OCI-LY7 (cell line): ENCODE measurements at regions of chr4 and their contacts with region 1.

Region 1: DNA sequence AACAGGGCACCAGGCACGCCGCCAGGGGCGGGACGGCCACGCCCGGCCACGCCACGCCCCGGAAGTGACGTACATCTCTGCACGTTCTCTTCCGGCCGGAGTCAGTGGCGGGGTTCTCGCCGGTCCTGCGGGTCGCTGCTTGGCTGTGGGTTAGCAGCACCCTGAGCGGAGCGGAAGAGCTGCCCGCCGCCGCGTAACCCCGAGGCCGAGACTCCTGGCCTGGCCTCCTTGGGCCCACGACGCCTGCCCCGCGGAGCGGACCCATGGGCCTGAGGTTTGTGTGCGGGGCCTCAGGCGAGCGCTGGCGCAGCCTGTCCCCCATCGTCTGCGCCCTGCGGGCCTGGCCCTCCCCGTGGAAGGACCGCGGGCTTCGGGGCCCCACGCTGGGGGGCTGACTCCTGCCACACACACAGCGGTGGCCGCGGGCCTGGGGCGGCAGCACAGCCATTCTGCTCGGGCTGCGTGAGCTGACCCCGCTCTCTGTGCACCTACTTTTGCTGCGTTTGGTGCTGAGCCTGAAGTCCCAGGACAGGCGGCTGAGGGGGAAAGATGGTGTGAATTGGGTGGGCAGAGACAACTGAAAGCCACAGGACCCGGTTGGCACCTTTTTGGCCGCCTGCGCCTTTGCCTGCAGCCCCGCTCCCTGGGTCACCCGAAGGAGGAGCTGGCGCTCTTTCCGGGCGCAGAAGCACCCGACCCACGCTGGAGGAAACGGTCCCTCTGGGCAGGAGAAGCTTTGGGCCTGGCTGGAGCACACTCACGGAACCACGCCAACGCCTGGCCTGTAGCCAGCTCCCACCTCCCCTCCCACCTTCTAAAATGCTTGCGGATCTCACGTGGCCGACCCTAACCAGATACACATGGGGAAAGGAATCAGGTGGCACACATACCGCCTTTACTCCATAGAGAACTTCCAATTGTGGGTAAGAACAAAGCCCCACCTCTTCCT is 28.1 kb downstream of the NOP14 start:
- DNase-seq: peak; percentile 96
- H3K4me3 ChIP-seq: peak overlapping the region; percentile 98
- H3K27ac ChIP-seq: peak overlapping the region; percentile 53
- H3K4me1 ChIP-seq: peaks cover 56% of the 10 kb centered on the region
- CTCF ChIP-seq: 0 out of 2 replicates have a peak, but pooled peaks have one; percentile 26

Region 2: DNA sequence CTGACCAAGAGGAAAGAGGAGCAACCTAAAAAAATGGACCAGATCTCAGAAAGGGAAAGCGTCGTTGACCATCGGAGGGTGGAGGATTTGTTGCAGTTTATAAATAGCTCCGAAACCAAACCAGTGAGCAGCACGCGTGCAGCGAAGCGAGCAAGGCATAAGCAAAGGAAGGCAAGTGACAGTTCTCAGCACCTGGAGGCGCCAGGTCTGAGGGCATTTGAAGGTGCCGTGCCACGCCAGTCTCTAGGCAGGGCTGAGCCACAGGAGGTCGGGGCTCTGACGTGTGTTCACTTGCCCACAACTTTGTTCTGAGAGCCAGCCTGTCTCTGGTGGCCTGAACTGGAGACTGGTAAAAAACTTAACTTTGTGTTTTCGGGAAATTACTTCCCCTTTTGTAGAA is 238.7 kb before region 1 on chr4:
- CTCF ChIA-PET with region 1: no interaction called
- POLR2A ChIA-PET with region 1: interaction called, 3 read pairs
- intact Hi-C with region 1: loop called (anchors 5 kb)
- DNase-seq: peak; percentile 98
- H3K4me3 ChIP-seq: peak overlapping the region; percentile 60
- H3K27ac ChIP-seq: peak overlapping the region; percentile 93
- H3K4me1 ChIP-seq: peaks cover 58% of the 10 kb centered on the region
- CTCF ChIP-seq: peak; percentile 60

Region 3: DNA sequence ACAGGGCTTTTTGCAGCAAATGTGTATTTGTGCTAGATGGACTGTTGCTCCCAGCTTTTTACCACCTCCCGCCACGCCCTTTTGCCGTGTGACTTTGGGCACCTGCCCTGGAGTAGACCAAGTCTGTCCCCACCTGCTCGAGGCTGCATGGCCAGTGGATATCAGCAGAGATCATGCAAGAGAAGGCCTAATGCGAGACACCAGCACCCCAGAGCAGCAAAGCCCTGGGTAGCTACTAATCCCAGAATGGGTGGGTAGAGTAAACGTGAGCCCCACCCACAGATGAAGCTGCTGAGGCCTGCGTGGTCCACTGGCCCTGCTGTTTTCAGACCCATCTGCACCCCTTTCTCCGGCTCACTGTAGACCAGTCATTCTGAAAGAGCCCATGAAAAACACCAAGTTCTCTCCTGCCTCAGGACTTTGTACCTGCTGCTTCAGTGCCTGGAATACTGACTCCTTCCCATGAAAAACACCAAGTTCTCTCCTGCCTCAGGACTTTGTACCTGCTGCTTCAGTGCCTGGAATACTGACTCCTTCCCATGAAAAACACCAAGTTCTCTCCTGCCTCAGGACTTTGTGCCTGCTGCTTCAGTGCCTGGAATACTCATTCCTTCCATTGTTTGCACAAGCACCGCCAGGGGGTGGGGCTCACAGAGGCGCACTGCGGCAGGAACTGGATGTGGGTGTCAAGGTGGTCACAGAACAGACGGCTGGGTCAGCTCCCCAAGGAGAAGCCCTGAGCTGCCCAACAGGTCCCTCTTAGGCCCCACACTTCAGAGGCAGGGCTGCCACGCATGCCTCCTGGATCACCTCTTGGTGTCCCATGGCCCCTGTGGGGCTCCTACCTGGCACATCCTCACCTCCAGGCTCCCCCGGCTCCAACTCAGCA is 173.8 kb before region 1 on chr4:
- CTCF ChIA-PET with region 1: no interaction called
- POLR2A ChIA-PET with region 1: interaction called, 3 read pairs
- intact Hi-C with region 1: loop called (anchors 1 kb)
- DNase-seq: no peak
- H3K4me3 ChIP-seq: no peak overlapping the region
- H3K27ac ChIP-seq: no peak overlapping the region
- H3K4me1 ChIP-seq: peaks cover 12% of the 10 kb centered on the region
- CTCF ChIP-seq: no peak

Region 4: GRCh38 chr4:2817701-2818350 is 117.3 kb before region 1 on chr4:
- CTCF ChIA-PET with region 1: no interaction called
- POLR2A ChIA-PET with region 1: no interaction called
- intact Hi-C with region 1: no loop called
- DNase-seq: no peak
- H3K4me3 ChIP-seq: peak overlapping the region; percentile 44
- H3K27ac ChIP-seq: no peak overlapping the region
- H3K4me1 ChIP-seq: peaks cover 25% of the 10 kb centered on the region
- CTCF ChIP-seq: no peak

Region 5: DNA sequence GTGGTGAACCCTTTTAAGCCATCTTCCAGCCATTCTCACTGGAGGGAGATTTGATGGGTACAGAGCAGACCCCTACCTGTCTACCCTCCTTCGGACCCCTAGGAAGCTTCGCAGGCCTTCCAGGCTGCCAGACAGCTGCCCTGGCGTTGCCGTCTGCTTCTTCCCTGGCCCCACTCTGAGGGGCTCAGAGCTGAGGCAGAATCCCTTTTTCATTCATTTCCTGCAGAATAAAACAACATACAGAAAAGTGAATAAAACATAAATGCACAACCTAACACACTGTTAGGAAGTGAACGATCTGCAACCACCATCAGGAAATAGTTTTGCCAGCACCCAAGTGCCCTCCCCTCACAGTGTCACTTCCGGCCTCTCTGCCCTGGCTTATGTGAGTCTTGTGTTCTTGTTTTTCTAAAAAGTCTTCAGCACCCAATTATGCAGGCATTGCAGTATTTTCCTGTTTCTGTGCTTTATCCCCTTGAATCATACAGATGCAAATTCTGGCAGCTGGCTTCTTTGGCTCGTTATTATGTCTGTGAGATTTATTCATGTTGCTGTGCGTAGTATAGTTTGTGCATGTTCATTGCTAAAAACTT is 97.1 kb before region 1 on chr4:
- CTCF ChIA-PET with region 1: no interaction called
- POLR2A ChIA-PET with region 1: no interaction called
- intact Hi-C with region 1: loop called (anchors 5 kb)
- DNase-seq: peak; percentile 82
- H3K4me3 ChIP-seq: peak overlapping the region; percentile 56
- H3K27ac ChIP-seq: peak overlapping the region; percentile 70
- H3K4me1 ChIP-seq: peaks cover 54% of the 10 kb centered on the region
- CTCF ChIP-seq: no peak

Region 6: GRCh38 chr4:2852481-2852921 is 82.6 kb before region 1 on chr4:
- CTCF ChIA-PET with region 1: no interaction called
- POLR2A ChIA-PET with region 1: no interaction called
- intact Hi-C with region 1: loop called (anchors 5 kb)
- DNase-seq: peak; percentile 80
- H3K4me3 ChIP-seq: no peak overlapping the region
- H3K27ac ChIP-seq: no peak overlapping the region
- H3K4me1 ChIP-seq: peaks cover 25% of the 10 kb centered on the region
- CTCF ChIP-seq: no peak

Region 7: DNA sequence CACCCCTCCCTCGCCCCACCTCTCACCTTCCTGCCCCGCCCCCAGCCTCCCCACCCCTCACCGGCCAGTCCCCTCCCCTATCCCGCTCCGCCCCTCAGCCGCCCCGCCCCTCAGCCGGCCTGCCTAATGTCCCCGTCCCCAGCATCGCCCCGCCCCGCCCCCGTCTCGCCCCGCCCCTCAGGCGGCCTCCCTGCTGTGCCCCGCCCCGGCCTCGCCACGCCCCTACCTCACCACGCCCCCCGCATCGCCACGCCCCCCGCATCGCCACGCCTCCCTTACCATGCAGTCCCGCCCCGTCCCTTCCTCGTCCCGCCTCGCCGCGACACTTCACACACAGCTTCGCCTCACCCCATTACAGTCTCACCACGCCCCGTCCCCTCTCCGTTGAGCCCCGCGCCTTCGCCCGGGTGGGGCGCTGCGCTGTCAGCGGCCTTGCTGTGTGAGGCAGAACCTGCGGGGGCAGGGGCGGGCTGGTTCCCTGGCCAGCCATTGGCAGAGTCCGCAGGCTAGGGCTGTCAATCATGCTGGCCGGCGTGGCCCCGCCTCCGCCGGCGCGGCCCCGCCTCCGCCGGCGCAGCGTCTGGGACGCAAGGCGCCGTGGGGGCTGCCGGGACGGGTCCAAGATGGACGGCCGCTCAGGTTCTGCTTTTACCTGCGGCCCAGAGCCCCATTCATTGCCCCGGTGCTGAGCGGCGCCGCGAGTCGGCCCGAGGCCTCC is 139.2 kb after region 1 on chr4 and contains the starts of genes HTT and HTT-AS:
- CTCF ChIA-PET with region 1: no interaction called
- POLR2A ChIA-PET with region 1: no interaction called
- intact Hi-C with region 1: no loop called
- DNase-seq: peak; percentile 96
- H3K4me3 ChIP-seq: peak within 1 kb of the TSS; percentile 100
- H3K27ac ChIP-seq: peak within 1 kb of the TSS; percentile 82
- H3K4me1 ChIP-seq: peaks cover 34% of the 10 kb centered on the region
- CTCF ChIP-seq: no peak
- total RNA-seq, gene HTT: 36.4 and 41.2 TPM in 2 replicates
- total RNA-seq, gene HTT-AS: not detected in 2 replicates